ENCODE measurements at regions of chr6 and their contacts with region 1.

Region 1: DNA sequence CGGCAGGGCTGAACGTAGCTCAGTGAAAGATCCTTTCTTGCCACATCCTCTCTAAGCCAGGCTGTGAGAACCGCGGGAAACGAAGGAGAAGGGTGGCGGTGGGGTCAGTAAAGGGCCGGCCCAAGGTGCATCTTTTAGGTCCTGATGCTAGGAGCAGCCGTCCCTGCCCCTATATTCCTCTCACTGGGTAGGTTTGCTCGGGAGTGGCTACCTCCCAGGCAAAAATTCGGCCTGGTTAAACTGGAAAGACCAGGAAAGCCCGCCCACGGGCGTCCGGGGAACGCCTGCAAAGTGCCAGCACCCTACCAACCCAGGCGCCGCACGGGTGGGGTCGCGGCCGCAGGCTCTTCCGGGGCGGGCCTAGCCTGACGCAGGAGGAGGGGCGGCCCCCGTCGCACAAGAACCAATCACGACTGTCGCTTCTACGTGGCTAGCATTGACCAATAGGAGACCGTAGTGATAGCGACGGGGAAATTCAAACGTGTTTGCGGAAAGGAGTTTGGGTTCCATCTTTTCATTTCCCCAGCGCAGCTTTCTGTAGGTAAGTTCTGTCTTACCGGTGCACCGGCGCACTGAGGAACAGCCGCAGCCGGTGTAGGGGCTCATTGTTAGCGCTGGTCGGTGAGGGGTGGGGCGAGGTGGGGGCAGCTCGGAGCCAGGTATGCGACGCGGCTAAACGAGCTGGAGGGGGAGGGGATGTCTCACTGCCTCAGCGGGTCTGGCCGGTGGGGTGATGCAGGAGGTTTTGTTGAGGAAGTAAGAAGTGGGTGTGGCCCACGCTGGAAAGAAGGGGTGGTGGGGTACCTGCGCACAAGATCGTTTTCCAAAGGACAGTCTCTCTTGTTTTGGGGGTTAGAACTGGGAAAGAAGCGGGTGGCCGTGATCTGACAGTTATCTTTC is at the start of gene TTK:
- DNase-seq: peak; percentile 96
- H3K4me3 ChIP-seq: peak within 1 kb of the TSS; percentile 89
- H3K27ac ChIP-seq: peak within 1 kb of the TSS; percentile 79
- H3K4me1 ChIP-seq: peaks cover 3% of the 10 kb centered on the region
- H3K27me3 ChIP-seq: no peaks in the 10 kb centered on the region
- CTCF ChIP-seq: no peak
- total RNA-seq, gene TTK: 57.4 and 62.5 TPM in 2 replicates

Region 2: DNA sequence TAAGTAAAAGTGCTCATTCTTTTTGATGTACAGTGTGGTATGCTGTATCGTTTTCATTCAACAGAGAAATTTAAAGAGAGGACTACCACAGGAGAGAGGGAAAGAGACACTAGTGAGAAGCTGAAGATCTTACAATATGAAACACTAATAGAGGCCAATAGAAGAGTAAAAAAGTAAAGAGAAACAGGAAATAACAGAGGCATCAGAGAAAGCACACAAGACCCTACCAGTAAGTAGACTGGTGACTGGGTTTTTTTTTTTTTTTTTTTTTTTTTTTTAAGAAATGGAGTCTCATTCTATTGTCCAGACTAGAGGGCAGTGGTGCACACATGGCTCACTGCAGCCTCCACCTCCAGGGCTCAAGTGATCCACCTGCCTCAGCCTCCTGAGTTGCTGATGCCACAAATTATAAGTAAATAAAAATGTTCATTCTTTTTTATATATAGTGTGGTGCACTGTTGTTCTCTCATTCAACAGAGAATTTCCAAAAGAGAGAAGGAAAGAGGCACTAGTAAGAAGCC is 75.9 kb before region 1 on chr6:
- CTCF ChIA-PET with region 1: no interaction called
- POLR2A ChIA-PET with region 1: no interaction called
- intact Hi-C with region 1: no loop called
- DNase-seq: no peak
- H3K4me3 ChIP-seq: no peak overlapping the region
- H3K27ac ChIP-seq: no peak overlapping the region
- H3K4me1 ChIP-seq: no peaks in the 10 kb centered on the region
- H3K27me3 ChIP-seq: no peaks in the 10 kb centered on the region
- CTCF ChIP-seq: no peak

Region 3: GRCh38 chr6:79949233-79949632 is 55.2 kb before region 1 on chr6:
- CTCF ChIA-PET with region 1: interaction called, 4 read pairs
- POLR2A ChIA-PET with region 1: no interaction called
- intact Hi-C with region 1: loop called (anchors 2 kb)
- DNase-seq: peak; percentile 77
- H3K4me3 ChIP-seq: no peak overlapping the region
- H3K27ac ChIP-seq: no peak overlapping the region
- H3K4me1 ChIP-seq: no peaks in the 10 kb centered on the region
- H3K27me3 ChIP-seq: no peaks in the 10 kb centered on the region
- CTCF ChIP-seq: peak; percentile 82